CD8-positive, alpha-beta T cell (primary cell): ENCODE measurements at regions of chr5 and their contacts with region 1.

Region 1: DNA sequence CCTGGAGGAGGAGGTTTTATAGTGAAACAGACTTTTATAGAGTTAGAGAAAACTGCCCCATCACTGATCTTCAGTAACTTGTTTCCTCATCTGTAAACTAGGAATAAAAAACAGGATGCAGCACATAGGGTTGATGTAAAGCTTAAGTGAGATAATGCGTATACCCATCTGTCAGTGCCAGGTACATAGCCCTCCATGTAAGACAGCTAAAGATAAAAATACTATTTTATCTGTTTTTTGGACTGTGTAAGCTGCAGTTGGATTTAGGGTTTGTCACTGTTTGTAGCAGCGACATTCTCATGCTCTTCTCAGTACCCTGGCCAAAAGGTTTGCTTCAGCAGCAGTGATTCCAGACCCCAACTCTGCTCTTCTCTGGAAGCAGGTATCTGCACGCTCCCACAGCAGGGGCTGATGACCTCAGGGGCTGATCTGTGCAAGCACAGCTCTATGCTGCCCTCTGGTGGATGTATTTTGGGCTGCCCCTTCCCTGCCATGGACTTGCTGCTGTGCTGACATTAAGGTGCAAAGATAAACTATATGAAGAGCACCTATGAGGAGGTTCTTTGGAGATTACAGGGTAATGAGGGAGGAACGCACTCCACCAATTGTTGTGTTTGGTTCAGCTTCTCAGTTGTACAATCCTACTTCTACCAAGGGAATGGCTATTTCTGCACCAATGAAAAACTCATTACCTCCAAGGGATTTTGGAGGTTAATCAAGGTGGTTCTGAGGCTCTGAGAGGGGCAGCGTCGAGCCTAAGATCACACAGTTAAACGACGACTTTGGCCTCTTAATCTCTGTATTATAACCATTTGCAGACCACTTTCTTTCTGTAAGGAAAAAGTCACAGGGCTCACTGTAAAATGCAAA is 13.1 kb downstream of the HMHB1 start:
- DNase-seq: peak; percentile 64 to 90 (median 85)
- ATAC-seq: peak; percentile 98
- H3K4me3 ChIP-seq: no peak overlapping the region
- H3K4me3 Mint-ChIP-seq: no peak overlapping the region
- H3K27ac ChIP-seq: no peak overlapping the region
- H3K27ac Mint-ChIP-seq: no peak overlapping the region
- H3K4me1 ChIP-seq: no peaks in the 10 kb centered on the region
- H3K4me1 Mint-ChIP-seq: peaks cover 9% of the 10 kb centered on the region
- H3K27me3 ChIP-seq: no peaks in the 10 kb centered on the region
- H3K27me3 Mint-ChIP-seq: peaks cover 2% of the 10 kb centered on the region
- CTCF ChIP-seq: peak; percentile 95

Region 2: DNA sequence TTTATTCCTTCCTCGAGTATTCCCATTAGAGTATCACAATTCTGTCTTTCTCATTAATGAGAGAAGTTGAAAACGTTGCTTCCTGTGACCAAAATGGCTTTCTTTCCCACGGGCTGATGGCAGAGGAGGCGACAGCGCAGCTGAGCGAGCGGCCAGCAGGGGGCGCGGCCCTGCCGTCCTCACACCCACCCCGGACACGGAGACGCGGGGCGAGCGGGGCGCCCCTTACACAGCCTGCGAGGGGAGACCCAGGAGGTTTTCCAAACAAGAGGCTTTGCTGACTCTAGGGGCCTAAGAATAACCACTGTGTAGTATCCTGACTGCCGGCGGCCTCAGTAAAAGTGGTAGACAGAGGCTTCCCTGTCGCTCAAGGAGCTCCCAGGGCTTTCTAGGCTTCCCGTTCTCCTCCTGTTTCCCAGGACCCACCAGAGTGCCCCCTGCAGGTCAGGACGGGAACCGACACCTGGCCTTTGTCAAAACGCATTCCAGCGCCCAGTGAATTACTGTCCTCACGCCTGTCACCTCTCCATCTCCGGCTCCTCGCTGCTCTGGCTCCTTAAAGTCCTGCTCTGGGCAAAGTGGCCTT is 1111.9 kb before region 1 on chr5:
- CTCF ChIA-PET with region 1: no interaction called
- POLR2A ChIA-PET with region 1: no interaction called
- intact Hi-C with region 1: loop called in 1 of 2 experiments (anchors 10 kb)
- DNase-seq: peak; percentile 70 to 93 (median 83)
- ATAC-seq: peak; percentile 95
- H3K4me3 ChIP-seq: peak overlapping the region; percentile 61 to 82
- H3K4me3 Mint-ChIP-seq: peak overlapping the region; percentile 76
- H3K27ac ChIP-seq: peak overlapping the region in 1 of 2 experiments; percentile 49
- H3K27ac Mint-ChIP-seq: peak overlapping the region; percentile 45
- H3K4me1 ChIP-seq: peaks cover 4% of the 10 kb centered on the region
- H3K4me1 Mint-ChIP-seq: peaks cover 18% of the 10 kb centered on the region
- H3K27me3 ChIP-seq: no peaks in the 10 kb centered on the region
- H3K27me3 Mint-ChIP-seq: no peaks in the 10 kb centered on the region
- CTCF ChIP-seq: peak; percentile 98

Region 3: DNA sequence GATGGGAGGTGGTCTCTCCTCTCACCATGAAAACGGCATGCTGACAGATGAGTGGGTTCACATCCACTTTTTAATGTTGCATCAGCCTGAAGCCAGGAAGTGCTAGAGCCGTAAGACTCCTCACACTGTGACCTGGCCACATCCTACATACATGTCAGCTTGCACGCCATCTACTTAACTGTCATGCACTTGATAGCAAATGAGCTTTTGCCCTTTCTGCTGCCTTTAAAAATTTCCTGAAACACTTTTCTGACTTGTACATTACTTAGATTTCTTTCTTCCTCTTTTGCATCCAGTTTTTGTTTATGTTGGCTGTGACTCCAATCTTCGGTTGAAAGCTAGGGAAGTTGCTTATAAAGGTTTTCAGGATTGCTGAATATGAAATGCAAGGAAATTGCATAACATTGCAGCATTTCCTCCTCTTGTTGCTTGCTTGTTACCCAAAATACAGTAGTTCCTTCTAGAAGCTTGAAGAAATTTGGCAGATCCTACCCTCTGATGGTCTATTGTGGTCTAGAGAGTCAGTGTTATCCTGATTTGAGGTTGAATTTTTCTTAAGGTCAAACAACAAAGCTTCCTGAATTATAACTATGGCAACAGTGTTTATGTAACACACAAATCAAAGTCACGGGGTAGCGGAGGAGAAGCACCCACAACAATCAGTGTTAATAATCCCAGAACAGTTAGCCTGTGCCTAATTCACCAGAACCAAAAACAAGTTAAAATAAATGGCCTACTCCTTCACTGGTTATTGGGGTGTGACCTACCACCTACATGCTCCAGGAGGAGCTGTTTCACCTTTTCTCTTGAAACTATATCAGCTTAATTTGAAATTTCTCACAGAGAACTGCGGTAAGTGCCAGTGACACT is 822.4 kb before region 1 on chr5:
- CTCF ChIA-PET with region 1: interaction called, 29 read pairs
- POLR2A ChIA-PET with region 1: interaction called, 7 read pairs
- intact Hi-C with region 1: loop called (anchors 1 kb)
- DNase-seq: peak; percentile 16 to 94 (median 58)
- ATAC-seq: peak; percentile 85
- H3K4me3 ChIP-seq: peak overlapping the region in 1 of 2 experiments; percentile 1
- H3K4me3 Mint-ChIP-seq: peak overlapping the region; percentile 56
- H3K27ac ChIP-seq: peak overlapping the region; percentile 83 to 89
- H3K27ac Mint-ChIP-seq: peak overlapping the region; percentile 87
- H3K4me1 ChIP-seq: peaks cover 43% of the 10 kb centered on the region
- H3K4me1 Mint-ChIP-seq: peaks cover 70% of the 10 kb centered on the region
- H3K27me3 ChIP-seq: no peaks in the 10 kb centered on the region
- H3K27me3 Mint-ChIP-seq: no peaks in the 10 kb centered on the region
- CTCF ChIP-seq: peak; percentile 70

Region 4: GRCh38 chr5:143094087-143094521 is 731.0 kb before region 1 on chr5:
- CTCF ChIA-PET with region 1: no interaction called
- POLR2A ChIA-PET with region 1: no interaction called
- intact Hi-C with region 1: loop called (anchors 10 kb)
- DNase-seq: peak in 3 of 9 experiments; percentile 10 to 41 (median 25)
- ATAC-seq: no peak
- H3K4me3 ChIP-seq: no peak overlapping the region
- H3K4me3 Mint-ChIP-seq: no peak overlapping the region
- H3K27ac ChIP-seq: no peak overlapping the region
- H3K27ac Mint-ChIP-seq: no peak overlapping the region
- H3K4me1 ChIP-seq: no peaks in the 10 kb centered on the region
- H3K4me1 Mint-ChIP-seq: no peaks in the 10 kb centered on the region
- H3K27me3 ChIP-seq: no peaks in the 10 kb centered on the region
- H3K27me3 Mint-ChIP-seq: no peaks in the 10 kb centered on the region
- CTCF ChIP-seq: no peak

Region 5: DNA sequence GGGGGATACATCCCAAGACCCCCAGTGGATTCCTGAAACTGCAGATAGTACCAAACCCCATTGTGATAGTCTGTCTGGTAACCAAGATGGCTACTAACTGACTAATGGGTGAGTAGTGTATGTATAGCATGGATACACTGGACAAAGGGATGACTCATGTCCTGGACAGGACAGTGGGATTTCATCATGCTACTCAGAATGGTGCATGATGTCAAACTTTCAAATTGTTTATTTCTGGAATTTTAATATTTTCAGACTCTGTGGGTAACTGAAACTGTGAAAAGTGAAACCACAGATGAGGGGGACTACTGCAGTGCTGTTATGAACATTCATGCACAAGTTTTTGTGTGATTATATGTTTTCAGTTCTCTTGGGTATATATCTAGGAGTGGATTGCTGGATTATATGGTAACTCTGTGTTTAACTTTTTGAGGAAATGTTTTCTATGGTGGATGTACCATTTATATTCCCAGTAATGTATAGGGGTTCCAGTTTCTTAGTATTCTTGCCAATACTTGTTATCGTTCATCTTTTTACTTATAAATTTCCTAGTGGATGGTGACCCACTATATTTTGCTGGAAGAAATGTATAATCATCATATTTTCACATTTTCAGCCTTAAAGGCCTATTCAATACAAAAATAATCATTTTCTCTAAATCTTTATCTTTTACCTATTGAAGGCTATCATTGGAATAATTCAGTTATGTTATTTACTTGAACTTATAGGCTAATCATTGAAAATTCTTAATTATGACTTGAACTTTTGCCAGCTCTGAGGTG is 562.5 kb before region 1 on chr5:
- CTCF ChIA-PET with region 1: no interaction called
- POLR2A ChIA-PET with region 1: no interaction called
- intact Hi-C with region 1: no loop called
- DNase-seq: peak in 1 of 9 experiments; percentile 12
- ATAC-seq: no peak
- H3K4me3 ChIP-seq: no peak overlapping the region
- H3K4me3 Mint-ChIP-seq: no peak overlapping the region
- H3K27ac ChIP-seq: no peak overlapping the region
- H3K27ac Mint-ChIP-seq: no peak overlapping the region
- H3K4me1 ChIP-seq: no peaks in the 10 kb centered on the region
- H3K4me1 Mint-ChIP-seq: no peaks in the 10 kb centered on the region
- H3K27me3 ChIP-seq: no peaks in the 10 kb centered on the region
- H3K27me3 Mint-ChIP-seq: no peaks in the 10 kb centered on the region
- CTCF ChIP-seq: no peak

Region 6: DNA sequence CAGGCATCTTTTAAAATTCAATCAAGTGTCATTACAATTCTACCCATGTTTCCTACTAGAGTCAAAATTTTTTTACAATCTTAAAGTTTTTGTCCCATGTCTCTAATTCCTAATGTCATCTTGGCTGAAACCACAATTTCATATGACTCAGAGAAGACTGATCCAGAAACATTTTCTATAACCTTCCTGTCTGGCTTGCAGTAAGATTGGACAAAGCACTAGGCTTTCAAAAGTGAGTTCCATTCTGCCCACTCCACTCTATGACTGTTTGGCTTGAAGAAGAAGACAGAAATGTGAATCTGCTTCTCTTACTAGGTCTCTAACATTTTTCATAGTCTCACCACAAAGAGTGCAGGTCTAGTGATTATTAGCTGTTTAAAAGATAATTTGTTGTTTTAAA is 510.4 kb before region 1 on chr5:
- CTCF ChIA-PET with region 1: no interaction called
- POLR2A ChIA-PET with region 1: no interaction called
- intact Hi-C with region 1: loop called in 1 of 2 experiments (anchors 10 kb)
- DNase-seq: no peak
- ATAC-seq: no peak
- H3K4me3 ChIP-seq: no peak overlapping the region
- H3K4me3 Mint-ChIP-seq: no peak overlapping the region
- H3K27ac ChIP-seq: no peak overlapping the region
- H3K27ac Mint-ChIP-seq: no peak overlapping the region
- H3K4me1 ChIP-seq: no peaks in the 10 kb centered on the region
- H3K4me1 Mint-ChIP-seq: peaks cover 37% of the 10 kb centered on the region
- H3K27me3 ChIP-seq: no peaks in the 10 kb centered on the region
- H3K27me3 Mint-ChIP-seq: no peaks in the 10 kb centered on the region
- CTCF ChIP-seq: no peak

Region 7: DNA sequence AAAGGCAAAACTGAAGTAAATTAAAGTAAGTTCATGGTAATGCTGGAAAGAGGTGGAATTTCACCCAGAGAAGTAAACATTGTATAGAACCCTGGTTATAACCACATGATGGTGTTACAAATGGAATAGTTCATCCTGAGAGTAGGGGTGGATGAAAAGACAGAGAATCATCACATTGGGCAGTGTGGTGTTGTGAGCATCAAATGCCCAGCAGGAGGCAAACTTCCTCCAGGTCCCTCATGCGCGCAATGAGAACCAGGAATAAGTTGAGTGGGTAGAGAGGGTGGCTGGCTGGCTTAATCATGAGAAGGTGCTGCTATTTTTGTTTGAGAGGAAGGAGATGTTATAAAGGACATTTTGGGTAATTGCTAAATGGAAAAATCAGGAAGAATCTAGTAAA is 176.4 kb before region 1 on chr5:
- CTCF ChIA-PET with region 1: interaction called, 4 read pairs
- POLR2A ChIA-PET with region 1: no interaction called
- intact Hi-C with region 1: loop called (anchors 1 to 5 kb)
- DNase-seq: peak in 2 of 9 experiments; percentile 37 to 51
- ATAC-seq: no peak
- H3K4me3 ChIP-seq: no peak overlapping the region
- H3K4me3 Mint-ChIP-seq: no peak overlapping the region
- H3K27ac ChIP-seq: no peak overlapping the region
- H3K27ac Mint-ChIP-seq: no peak overlapping the region
- H3K4me1 ChIP-seq: no peaks in the 10 kb centered on the region
- H3K4me1 Mint-ChIP-seq: no peaks in the 10 kb centered on the region
- H3K27me3 ChIP-seq: no peaks in the 10 kb centered on the region
- H3K27me3 Mint-ChIP-seq: no peaks in the 10 kb centered on the region
- CTCF ChIP-seq: no peak